Cardiac septum (tissue), 1 donor: ENCODE measurements at regions of chr7 and their contacts with region 1.

Region 1: GRCh38 chr7:47435889-47436312 is 146.0 kb downstream of the TNS3 start:
- DNase-seq: peak; percentile 77

Region 2: DNA sequence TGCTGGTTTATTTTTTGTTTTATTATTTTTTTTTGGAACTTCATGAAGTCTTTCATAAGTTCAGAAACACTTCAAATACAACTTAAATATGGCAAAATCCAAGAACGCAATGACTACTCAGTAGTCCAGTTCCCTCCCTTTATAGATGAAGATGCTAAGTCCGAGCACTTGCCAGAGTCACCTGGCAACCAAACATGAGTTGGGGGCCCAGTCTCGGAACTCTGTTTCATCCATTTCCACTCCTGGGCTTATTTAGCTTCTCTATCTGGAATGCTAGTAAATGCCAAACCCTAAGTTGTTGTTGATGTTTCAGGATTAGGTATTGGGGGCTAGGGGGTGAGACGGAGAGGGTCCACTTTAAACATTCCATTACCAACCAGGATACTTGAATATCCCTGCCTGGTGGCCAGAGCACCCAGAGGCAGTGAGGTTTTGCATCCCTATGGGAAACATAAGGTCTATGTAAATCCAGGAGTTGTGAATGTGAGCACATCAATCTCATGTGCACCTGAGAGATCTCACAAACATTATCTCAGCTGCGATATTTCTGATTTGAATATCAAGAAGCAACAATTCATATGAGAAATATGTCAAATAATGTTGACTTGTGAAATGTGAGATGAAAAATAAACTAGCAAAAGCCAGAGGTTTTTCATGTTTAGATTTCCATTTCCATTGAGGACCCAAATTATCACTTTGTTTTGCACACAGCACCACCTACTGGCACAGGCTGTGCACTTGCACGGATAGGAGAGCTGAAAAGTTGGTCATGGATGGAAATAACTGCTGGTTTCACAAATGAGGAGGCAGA is 383.1 kb after region 1 on chr7:
- intact Hi-C with region 1: loop called (anchors 5 kb)
- DNase-seq: no peak